ENCODE measurements at regions of chr20 and their contacts with region 1.

Region 1: DNA sequence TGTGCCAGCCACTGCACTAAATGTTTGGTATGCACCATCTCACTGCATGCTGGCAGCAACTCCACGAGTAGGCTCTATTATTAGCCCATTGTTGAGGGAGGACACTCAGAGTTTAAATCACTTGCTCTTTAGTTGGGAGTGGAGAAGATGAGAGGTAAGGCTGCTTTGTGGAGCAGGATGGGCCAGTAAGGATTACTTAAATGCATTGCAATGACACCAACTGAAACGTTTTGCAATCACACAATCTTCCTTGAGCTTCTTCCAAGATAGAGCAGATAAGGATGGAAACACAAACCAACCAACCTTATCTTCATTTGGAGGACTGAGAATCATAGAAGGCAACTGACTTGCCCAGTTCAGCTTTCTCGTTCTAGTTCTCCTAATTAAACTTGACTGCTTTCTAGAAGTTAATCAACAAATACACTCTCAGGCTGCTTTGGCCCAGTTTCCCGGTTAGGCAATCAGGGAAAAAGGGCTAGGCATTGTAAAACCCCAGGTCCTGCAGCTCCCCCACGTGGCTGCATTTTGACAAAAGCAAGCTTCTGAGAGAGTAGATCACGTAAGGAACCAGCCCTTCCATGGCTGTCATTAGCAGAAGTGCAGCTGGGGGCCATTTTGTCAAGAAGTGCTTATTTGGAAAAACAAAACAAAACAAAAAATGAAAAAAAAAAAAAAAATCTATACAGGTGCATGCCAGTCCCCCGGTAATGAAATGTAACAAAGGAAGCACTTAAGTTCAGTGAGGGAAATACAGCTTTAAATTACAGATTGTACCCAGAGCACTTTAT is 130.6 kb downstream of the BCAS1 start:
- DNase-seq: peak; percentile 84
- H3K4me3 ChIP-seq: no peak overlapping the region
- H3K27ac ChIP-seq: no peak overlapping the region
- H3K27me3 ChIP-seq: no peaks in the 10 kb centered on the region
- CTCF ChIP-seq: peak; percentile 80

Region 2: GRCh38 chr20:53547664-53548239 is 392.0 kb before region 1 on chr20:
- CTCF ChIA-PET with region 1: interaction called, 18 read pairs
- POLR2A ChIA-PET with region 1: no interaction called
- DNase-seq: peak; percentile 47
- H3K4me3 ChIP-seq: no peak overlapping the region
- H3K27ac ChIP-seq: no peak overlapping the region
- H3K27me3 ChIP-seq: no peaks in the 10 kb centered on the region
- CTCF ChIP-seq: peak; percentile 92

Region 3: DNA sequence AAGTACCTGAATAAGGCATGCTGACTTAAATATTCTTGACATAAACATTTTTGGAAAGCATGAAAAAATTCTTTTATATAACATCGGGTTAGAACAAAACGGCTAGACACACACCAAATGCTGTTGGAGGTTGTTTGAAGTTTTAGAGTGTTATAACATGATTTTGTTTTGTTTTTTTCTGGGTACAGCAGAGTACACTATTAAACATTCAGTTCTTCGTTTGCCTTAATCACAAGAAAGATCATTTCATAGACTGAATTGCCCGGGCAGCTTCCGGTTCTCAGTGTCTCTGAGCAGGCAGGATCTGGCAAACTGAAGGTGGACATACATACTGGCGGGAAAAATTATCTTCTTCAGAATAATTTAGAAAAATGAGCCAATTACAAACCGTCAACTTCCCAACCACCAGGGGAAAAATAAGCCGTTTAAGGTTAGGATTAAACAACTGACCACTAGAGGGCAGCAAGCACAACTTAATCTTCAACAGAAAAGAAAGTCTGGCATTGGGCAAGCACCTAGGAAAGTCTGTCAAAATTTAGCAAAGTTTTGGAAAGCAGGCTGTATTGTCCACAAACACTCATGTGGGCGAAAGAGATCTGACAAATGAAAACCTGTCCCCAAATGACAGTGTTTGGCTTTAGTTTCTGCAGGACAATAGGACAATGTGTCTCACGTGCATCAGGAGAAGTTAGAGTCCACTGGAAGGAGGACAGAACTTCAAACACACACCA is 361.1 kb before region 1 on chr20:
- CTCF ChIA-PET with region 1: interaction called, 154 read pairs
- POLR2A ChIA-PET with region 1: interaction called, 3 read pairs
- DNase-seq: peak; percentile 77
- H3K4me3 ChIP-seq: peak overlapping the region; percentile 31; the same call in 1 of the 2 replicates
- H3K27ac ChIP-seq: no peak overlapping the region
- H3K27me3 ChIP-seq: no peaks in the 10 kb centered on the region
- CTCF ChIP-seq: peak; percentile 83

Region 4: GRCh38 chr20:53623454-53624211 is 316.1 kb before region 1 on chr20:
- CTCF ChIA-PET with region 1: interaction called, 20 read pairs
- POLR2A ChIA-PET with region 1: no interaction called
- DNase-seq: no peak
- H3K4me3 ChIP-seq: peak overlapping the region; percentile 34
- H3K27ac ChIP-seq: peak overlapping the region; percentile 69
- H3K27me3 ChIP-seq: no peaks in the 10 kb centered on the region
- CTCF ChIP-seq: 0 out of 2 replicates have a peak, but pooled peaks have one; percentile 4

Region 5: GRCh38 chr20:53926428-53927028 is 13.2 kb before region 1 on chr20:
- CTCF ChIA-PET with region 1: interaction called, 20 read pairs
- POLR2A ChIA-PET with region 1: interaction called, 3 read pairs
- DNase-seq: no peak
- H3K4me3 ChIP-seq: no peak overlapping the region
- H3K27ac ChIP-seq: peak overlapping the region; percentile 71
- H3K27me3 ChIP-seq: no peaks in the 10 kb centered on the region
- CTCF ChIP-seq: 0 out of 2 replicates have a peak, but pooled peaks have one; percentile 1

Region 6: DNA sequence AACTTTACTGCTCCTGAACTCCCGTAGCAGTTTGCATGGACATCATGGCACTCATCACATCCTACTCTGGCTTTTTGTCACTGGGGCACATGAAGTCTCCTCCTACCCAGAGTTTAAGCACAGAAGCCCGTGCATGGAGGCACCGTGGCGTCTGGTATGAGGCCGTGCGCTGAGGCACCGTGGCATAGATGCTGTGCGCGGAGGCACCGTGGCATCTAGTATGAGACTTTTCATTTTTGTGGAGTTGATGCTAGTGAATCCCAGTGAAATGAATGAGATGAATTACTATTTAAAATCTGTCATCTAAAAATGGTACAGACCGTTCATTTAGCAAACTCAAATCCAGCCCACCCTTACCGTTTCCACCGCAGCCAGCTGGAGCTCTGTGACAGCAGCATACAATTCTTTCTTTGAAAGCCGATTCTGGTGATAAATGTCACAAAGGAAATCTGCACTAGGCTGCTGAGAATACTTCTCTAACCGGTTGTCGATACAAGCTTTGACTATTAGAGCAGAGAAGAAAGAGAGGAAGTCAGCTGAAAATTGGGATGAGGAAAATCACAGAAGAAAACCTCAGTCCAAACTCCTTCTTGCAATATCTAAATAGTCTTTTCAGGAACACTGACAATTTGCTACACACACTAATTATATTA is 222.7 kb after region 1 on chr20:
- CTCF ChIA-PET with region 1: no interaction called
- POLR2A ChIA-PET with region 1: no interaction called
- DNase-seq: no peak
- H3K4me3 ChIP-seq: no peak overlapping the region
- H3K27ac ChIP-seq: no peak overlapping the region
- H3K27me3 ChIP-seq: peaks cover 17% of the 10 kb centered on the region
- CTCF ChIP-seq: no peak

Measured in AG04450 (cell line).